ENCODE measurements at regions of chr6 and their contacts with region 1.

Region 1: DNA sequence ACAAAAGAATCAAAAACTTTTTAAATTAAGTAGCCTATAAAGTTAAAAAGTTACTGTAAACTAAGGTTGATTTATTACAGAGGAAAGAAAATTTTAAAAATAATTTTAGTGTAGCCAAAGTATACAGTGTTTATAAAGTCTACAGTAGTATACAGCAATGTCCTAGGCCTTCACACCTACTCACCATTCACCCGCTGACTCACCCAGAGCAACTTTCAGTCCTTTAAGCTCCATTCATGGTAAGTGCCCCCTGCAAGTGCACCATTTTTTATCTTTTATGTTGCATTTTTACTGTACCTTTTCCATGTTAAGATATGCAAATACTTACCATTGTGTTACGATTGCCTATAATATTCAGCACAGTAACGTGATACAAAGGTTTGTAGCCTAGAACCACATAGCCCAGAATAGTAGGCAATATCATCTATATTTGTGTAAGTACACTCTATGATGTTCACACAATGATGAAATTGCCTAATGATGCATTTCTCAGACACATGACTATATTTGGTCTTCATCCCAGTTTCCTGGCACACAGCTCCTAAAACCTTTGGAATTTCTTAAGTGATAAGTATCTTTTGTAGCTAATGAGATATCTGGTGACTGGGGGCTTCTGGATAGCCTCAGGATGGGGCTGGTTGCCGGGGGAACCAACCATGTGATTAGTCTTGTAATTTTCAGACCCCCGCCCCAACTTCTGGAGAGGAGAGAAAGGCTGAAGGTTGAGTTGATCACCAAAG is 111.0 kb downstream of the MRPL14 start:
- DNase-seq: peak; percentile 75
- ATAC-seq: peak; percentile 40; the same call in 1 of the 2 replicates
- H3K4me3 ChIP-seq: no peak overlapping the region
- H3K27ac ChIP-seq: peak overlapping the region; percentile 57
- H3K4me1 ChIP-seq: peaks cover 15% of the 10 kb centered on the region
- H3K27me3 ChIP-seq: no peaks in the 10 kb centered on the region
- CTCF ChIP-seq: no peak
- POLR2A ChIP-seq: no peak
- RAD21 ChIP-seq: no peak

Region 2: DNA sequence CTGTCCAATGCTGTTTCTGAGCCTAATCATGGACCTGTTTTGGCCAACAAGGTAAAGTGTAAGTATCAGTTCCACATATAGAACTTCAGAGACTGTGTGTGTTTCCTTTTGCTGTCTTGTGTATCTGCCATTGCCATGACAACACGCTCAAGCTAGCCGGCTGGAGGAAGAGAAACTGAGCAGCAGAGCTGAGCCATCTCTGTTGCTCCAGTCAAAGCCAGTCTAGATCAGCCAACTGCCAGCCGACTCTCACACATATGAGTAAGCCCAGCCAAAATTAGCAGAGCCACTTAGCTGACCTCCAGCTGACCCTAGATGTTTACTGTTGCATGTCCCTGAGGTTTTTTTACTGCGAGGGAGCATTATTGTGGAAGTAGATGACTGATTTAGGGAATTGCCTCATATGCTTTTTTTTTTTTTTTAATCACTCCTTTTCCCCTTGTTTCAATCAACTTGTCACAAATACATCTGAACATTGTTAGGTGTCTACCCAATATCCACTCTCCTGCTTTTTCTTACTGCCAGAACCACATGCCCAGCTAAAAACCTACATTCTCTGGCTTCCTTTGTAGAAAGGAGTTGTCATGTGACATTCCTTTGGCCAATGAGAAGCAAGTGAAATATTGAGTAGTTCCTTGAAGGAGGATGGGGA is 1665.7 kb after region 1 on chr6:
- CTCF ChIA-PET with region 1: no interaction called
- POLR2A ChIA-PET with region 1: interaction called, 10 read pairs
- dilution Hi-C with region 1: no loop called
- in situ Hi-C with region 1: no loop called
- intact Hi-C with region 1: no loop called
- DNase-seq: no peak
- ATAC-seq: no peak
- H3K4me3 ChIP-seq: no peak overlapping the region
- H3K27ac ChIP-seq: no peak overlapping the region
- H3K4me1 ChIP-seq: peaks cover 10% of the 10 kb centered on the region
- H3K27me3 ChIP-seq: no peaks in the 10 kb centered on the region
- CTCF ChIP-seq: no peak
- POLR2A ChIP-seq: no peak
- RAD21 ChIP-seq: no peak